ENCODE measurements at regions of chr14 and their contacts with region 1.

Region 1: DNA sequence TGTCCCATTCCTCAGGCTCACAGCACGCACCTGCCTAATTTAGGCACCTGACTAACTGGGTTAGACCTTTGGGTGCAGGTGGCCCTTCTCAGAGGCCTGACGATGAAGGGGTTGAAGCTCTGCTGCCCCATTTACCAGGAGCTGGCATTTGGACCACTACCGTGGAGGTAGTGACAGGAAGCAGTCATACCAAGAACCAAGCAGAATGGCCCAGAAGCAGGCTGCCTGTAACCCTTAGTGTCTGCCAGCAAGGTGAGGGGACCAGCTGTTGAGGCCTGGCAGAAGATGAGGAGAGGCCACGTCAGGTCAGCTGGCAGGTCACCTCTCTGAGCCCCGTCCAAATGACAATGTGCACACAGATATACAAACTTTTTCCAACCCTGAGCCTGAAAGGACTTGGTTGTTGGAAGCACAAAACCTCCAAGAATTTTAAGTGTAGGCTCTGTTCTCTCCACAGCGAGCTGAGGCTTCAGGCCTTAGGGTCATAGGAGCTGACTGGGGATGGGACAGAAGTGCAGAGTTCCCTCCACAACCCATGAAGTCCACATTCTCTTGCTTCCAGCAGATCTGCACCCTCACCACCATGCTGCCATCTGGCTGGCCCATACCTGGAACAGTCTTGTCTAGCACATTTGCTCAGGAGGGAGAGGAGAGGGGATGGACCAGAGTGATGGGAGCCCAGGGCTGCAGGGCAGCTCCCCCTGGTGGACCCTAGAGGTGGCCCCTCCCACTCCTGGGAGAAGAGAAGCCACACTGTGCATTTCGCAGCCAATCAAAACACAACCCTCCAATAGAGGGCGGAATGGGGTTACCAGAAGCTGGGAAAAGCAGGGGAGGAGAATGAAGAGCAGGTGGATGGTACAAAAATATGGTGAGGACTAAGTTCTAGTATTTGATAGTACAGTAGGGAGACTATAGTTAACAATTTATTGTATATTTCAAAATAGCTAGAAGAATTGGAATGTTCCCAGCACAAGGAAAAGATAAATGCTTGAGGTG is 23.3 kb downstream of the VASH1 start:
- DNase-seq: peak; percentile 87
- ATAC-seq: peak; percentile 90

Region 2: DNA sequence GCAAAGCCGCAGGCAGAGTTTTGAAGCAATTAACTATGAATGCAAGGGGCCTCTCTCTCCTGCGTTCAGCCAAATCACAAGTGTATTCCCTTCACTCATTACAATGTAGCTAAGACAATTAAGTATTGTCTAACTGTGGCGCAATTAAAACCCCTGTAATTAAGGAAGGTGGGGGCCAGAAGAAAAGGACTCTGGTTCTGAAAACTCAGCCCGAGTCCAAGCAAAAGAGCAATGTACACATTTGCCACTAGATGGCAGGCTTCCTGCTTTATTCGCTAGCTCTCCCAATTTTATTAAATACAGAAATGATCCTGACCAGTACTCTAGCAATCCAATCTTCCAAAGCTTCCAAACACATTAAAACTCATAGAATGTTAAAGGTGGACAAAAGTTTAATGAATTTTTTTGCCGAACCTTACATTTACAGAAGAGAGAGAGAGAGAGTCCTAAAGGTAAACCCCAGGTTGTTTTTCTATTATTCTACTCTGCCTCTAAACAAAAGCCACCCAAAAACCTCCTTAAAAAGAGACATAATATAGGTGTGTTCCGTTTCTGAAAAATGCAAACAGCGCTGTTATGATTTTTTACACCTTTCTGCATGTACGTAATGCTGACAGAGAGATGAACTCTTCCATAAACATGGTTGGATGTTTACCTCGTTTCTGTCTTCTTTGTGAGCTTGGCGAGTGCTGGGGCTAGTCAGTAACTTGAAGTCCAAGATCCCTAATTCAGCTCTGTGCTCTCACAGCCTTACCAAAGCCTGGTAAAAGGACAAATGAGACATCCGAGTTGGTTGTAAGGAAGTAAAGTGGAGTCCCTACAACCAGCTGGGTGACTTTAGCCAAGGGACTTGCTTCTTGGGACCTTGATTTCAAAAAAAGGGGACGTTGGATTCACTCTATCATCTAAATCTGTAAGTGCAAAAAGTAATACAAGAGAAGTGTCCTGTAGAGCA is 74.2 kb before region 1 on chr14:
- intact Hi-C with region 1: loop called (anchors 5 kb)
- DNase-seq: no peak
- ATAC-seq: peak; percentile 65

Measured in left ventricle myocardium superior (tissue), 1 donor.